ENCODE measurements at regions of chr16 and their contacts with region 1.

Region 1: DNA sequence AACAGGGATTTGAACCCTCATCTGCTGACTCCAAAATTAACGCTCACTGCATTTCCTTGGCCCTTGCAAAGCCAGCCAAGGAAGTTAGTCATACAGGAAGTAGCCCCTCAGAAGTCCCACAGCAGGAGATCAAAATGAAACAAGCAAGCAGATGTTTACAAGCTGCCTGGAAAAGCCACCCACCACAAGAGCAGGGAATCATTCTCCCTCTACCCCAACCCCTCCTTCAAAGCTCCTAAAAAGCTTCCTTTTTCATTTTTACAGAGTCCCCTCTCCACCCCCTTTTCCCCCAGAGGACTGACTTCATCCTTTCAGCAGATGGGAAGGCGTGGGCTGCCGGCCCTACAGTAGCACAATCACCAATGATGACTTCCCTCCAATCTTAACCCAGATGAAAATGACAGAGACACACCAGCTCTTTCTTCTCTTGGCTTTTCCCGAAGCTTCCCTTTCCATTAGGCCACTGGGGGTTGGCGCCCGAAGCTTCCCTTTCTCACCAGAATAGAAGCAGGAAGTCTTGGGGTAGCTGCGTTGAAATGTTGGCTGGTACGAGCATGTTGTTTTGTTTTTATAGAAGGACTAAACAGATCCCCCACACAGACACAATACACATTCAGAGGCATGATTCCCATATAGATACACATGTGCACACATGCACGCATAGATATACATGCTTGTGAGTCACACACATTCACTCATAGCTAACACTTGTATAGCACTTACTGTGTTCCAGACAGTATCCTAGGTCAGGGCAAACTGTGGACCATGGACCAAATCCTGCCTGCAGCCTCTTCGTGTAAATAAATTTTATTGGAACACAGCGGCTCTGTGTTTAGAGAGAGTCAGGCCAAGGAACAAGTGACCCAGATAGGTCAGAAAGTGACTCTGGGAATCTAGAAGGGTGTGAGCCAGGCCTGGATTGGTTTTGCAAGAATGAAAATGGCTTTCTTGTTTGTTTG is 17.4 kb downstream of the ITPRIPL2 start:
- DNase-seq: peak; percentile 59
- H3K4me3 Mint-ChIP-seq: peak overlapping the region; percentile 59
- H3K27ac Mint-ChIP-seq: peak overlapping the region; percentile 82
- H3K4me1 Mint-ChIP-seq: peaks cover 53% of the 10 kb centered on the region
- H3K27me3 Mint-ChIP-seq: no peaks in the 10 kb centered on the region

Region 2: DNA sequence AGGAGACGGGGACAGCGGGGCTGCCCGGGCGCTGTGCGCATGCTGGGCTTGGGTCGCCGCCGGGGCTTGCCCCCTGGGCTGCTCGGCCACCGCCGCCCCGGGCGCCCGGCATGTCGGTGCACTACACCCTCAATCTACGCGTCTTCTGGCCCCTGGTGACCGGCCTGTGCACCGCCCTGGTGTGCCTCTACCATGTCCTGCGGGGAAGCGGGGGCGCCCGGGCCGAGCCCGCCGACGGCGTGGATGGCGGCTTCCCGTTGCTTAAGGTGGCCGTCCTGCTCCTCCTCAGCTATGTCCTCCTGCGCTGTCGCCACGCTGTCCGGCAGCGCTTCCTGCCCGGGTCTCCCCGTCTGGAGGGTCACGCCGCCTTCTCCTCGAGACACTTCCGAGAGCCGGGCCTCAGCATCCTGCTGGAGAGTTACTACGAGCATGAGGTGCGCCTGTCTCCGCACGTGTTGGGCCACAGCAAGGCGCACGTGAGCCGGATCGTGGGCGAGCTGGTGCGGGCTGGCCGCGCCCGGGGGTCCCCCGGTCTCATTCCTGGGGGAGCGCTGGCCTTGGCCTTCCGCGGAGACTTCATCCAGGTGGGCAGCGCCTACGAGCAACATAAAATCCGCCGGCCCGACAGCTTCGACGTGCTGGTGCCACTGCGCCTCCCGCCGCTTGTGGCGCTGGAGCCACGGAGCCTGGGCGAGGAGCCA is 16.6 kb before region 1 on chr16:
- intact Hi-C with region 1: loop called (anchors 1 kb)
- DNase-seq: peak; percentile 73
- H3K4me3 Mint-ChIP-seq: peak overlapping the region; percentile 87
- H3K27ac Mint-ChIP-seq: peak overlapping the region; percentile 87
- H3K4me1 Mint-ChIP-seq: peaks cover 35% of the 10 kb centered on the region
- H3K27me3 Mint-ChIP-seq: peaks cover 9% of the 10 kb centered on the region